Mammary epithelial cell (primary cell): ENCODE measurements at regions of chr2 and their contacts with region 1.

Region 1: DNA sequence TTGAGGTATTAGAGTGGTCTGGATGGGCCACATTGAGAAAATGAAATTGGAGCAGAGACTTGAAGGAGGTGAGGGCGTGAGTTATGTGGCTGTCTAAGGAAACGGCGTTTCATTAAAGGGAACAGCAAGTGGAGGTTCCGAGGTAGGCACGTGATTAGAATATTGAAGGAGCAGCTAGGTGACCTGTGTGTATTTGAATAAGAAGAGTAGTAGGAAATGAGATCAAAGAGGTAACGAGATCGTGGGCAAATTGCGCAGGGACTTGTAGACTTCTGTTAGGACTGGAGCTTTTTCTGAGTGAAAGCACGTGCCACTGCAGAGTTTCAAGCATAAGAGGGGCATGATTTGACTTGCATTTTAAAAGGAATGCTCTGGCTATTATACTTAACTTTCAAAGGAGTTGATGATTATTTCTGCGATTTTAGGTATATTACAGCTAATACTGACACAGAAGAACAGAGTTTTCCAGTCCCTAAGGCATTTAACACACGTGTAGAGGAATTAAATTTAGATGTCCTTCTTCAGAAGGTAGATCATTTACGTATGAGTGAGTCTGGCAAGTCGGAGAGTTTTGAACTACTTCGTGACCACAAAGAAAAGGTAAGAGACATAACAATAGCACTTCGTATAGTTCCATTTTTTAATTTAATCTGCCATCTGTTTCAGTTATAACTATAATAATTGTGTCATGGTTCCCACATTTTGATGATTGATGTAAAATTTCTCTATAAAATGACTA is 48.7 kb downstream of the RMDN2 start:
- DNase-seq: peak; percentile 34
- H3K4me3 ChIP-seq: peak overlapping the region; percentile 23 to 45 (median 35)
- H3K27ac ChIP-seq: peak overlapping the region; percentile 30
- H3K4me1 ChIP-seq: peaks cover 8% of the 10 kb centered on the region
- H3K27me3 ChIP-seq: no peaks in the 10 kb centered on the region
- CTCF ChIP-seq: no peak

Region 2: DNA sequence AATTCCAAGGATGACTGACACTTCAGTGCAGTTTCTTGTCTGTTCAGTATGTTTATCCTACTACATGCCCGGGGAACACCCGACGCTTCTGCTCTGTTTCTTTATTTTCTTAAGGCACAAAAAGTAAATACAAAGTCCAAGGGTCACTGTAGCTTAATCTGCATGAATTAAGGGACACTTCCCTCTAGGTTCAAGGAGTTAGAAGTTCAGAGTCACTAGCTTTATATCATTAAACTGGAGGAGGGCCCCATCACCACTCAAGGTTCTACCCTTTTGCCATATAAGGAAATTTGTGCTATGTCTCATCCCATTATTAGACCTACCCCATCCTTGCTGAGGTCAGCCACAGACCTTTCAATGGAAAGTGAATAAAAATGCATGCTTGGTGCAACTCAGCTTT is 76.3 kb before region 1 on chr2:
- CTCF ChIA-PET with region 1: no interaction called
- dilution Hi-C with region 1: no loop called
- in situ Hi-C with region 1: no loop called
- intact Hi-C with region 1: no loop called
- DNase-seq: no peak
- H3K4me3 ChIP-seq: no peak overlapping the region
- H3K27ac ChIP-seq: no peak overlapping the region
- H3K4me1 ChIP-seq: peaks cover 12% of the 10 kb centered on the region
- H3K27me3 ChIP-seq: no peaks in the 10 kb centered on the region
- CTCF ChIP-seq: no peak

Region 3: DNA sequence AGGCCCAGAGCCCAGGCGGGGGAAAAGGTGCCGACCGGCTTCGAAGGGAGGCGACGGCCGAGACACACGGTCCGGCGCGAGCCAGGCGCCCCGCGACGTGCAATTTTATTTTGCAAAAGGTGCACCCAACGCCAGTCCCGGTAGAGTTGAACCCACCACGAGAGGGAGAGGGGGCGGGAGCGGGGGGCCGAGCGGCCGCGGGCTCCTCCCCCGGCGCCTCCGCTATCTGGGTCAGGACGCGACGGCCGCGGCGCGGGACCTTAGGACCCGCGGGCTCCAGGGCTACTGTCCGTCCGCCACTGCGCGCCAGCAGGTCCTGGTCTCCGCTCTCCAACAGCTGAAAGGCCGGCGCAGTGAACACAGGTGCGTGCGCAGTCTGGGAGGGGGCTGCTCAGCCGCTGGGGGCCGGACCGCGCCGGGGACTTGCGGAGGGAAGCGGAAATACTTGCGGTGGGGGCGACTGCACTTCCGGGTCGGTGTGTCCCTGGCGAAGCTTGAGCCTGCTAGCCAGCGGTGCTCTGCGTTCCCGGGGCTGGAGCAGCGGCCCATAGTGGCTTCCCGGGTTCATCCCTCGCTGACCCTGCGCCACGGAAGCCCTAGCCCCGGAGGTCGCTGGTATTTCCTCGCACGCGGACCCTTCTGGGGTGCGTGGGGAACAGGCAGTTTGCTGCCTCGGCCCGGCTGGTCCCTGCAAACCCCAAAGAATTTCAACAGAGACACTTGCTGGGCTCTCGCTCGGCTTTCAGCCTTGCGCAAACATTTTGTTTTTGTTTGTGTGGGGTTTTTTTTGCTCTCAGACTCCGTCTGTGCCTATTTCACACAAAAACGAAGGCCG is 48.5 kb before region 1 on chr2 and contains the start of gene RMDN2:
- CTCF ChIA-PET with region 1: no interaction called
- dilution Hi-C with region 1: no loop called
- in situ Hi-C with region 1: no loop called
- intact Hi-C with region 1: loop called (anchors 5 kb)
- DNase-seq: peak; percentile 87
- H3K4me3 ChIP-seq: peak within 1 kb of the TSS; percentile 67 to 79 (median 78)
- H3K27ac ChIP-seq: peak within 1 kb of the TSS; percentile 68
- H3K4me1 ChIP-seq: no peaks in the 10 kb centered on the region
- H3K27me3 ChIP-seq: no peaks in the 10 kb centered on the region
- CTCF ChIP-seq: peak in 1 of 2 donors; percentile 6
- total RNA-seq, gene RMDN2: 5.4 to 12.5 TPM

Region 4: DNA sequence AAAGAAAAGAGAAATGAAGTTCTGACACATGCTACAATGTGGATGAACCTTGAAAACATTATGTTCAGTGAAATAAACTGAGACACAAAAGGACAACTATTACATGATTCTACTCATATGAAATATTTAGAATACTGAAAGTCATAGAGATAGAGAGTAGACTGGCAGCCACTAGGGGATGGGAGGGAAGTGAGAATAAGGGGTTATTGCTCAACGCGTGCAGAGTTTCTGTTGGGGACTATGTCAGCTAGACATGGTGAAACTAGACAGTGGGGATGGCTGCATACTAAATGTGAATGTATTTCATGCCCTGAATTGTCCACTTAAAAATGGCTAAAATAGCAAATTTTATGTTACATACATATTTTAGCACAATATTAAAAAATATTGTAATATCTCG is 511.9 kb after region 1 on chr2:
- CTCF ChIA-PET with region 1: no interaction called
- dilution Hi-C with region 1: no loop called
- in situ Hi-C with region 1: loop called in 1 of 2 experiments (anchors 25 kb)
- intact Hi-C with region 1: no loop called
- DNase-seq: no peak
- H3K4me3 ChIP-seq: no peak overlapping the region
- H3K27ac ChIP-seq: no peak overlapping the region
- H3K4me1 ChIP-seq: no peaks in the 10 kb centered on the region
- H3K27me3 ChIP-seq: no peaks in the 10 kb centered on the region
- CTCF ChIP-seq: no peak